Left lung (tissue), 14 donors: ENCODE measurements at regions of chr6 and their contacts with region 1.

Region 1: DNA sequence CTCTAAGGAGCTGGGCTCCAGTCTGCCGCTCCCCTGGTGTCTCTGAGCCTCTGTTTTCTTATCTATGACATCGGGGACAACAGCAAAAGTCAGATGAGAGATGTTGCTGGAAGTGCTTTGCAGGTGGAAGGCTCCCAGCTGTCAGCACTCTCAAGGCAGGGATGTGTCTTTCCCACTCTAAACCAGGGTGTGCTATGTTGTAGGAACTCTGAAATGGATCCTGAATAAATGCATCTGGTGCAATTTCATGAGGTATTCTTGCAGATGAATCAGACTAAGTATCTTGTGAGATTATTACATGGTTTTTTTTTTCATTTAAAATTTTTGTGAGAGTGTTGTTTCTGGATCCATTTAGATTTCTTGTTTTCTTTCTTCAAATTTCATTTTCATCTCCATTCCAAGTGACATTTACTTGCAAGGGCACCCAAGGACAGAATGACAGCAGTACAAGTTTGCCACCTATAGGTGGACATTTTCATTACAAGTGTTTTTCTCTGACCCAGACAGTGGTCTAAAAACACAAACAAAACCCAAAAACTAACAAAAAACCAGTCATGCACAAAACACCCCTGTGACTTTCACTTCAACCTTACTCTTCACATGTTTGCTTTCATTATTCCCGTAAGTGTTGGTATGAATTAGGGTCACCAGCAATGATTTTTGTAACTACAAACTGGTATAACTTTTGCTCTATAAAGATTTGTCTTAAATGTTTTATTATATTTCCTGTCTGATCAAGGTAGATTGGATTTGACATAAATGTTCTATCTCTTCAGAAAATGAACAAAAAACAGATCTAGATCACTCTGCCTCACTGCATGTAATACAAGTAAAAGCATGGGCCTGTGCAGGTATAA is 14.7 kb upstream of the SIM1 start:
- DNase-seq: no peak
- ATAC-seq: peak; percentile 74
- H3K4me3 ChIP-seq: no peak overlapping the region
- H3K27ac ChIP-seq: no peak overlapping the region
- H3K4me1 ChIP-seq: no peaks in the 10 kb centered on the region
- H3K27me3 ChIP-seq: peaks cover under 1 to 23% of the 10 kb centered on the region in 2 donors
- CTCF ChIP-seq: peak; percentile 54 to 61

Region 2: DNA sequence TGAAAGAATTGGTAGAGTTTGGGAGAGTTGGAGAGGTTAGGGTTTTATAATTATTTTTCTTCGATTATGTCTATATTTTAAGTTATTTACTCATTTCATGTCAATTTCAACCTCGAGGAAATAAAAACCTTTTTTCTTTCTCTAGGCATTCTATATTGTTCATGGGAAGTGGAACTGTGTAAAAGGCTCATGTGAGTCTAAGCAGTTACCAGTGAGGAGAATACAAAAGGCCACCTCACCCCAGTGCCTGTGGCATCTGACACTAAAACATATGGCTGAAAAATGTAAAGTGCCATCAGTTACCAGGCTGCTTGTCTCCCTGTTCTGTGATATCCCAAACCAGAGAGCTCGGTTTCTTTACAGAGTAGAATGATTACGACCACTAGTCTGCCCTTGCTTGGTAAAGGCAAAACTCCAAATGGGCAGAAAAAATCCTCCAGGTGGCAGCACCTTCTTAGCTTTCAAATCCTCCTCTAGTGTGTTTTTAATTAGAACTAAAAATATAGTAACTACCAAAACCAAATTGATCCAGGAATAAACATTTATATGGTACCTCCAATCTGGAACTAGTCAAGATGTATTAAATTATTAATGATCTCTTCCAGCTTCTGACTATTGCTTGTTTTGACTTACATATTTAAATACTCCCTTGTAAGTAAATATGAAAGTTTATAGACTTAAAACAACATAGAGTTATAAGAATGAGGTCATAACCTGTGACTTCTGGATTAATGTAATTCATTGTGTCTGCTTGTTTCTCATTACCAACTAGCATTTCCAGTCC is 362.8 kb before region 1 on chr6:
- intact Hi-C with region 1: loop called in 1 of 2 experiments (anchors 5 kb)
- DNase-seq: peak in 2 of 4 donors; percentile 29 to 52
- ATAC-seq: peak; percentile 64
- H3K4me3 ChIP-seq: no peak overlapping the region
- H3K27ac ChIP-seq: no peak overlapping the region
- H3K4me1 ChIP-seq: no peaks in the 10 kb centered on the region
- H3K27me3 ChIP-seq: no peaks in the 10 kb centered on the region
- CTCF ChIP-seq: peak; percentile 58 to 60